Activated B cell treated with CpG ODN at 0.5 μM for 24 hours (primary cell): ENCODE measurements at regions of chr21 and their contacts with region 1.

Region 1: GRCh38 chr21:39388038-39388810 is 39.3 kb upstream of the HMGN1 start:
- DNase-seq: peak; percentile 84
- ATAC-seq: peak; percentile 82
- H3K4me3 Mint-ChIP-seq: peak overlapping the region; percentile 82
- H3K27ac Mint-ChIP-seq: peak overlapping the region; percentile 75
- H3K4me1 Mint-ChIP-seq: peaks cover 26% of the 10 kb centered on the region
- H3K27me3 Mint-ChIP-seq: no peaks in the 10 kb centered on the region
- CTCF ChIP-seq: peak; percentile 88

Region 2: DNA sequence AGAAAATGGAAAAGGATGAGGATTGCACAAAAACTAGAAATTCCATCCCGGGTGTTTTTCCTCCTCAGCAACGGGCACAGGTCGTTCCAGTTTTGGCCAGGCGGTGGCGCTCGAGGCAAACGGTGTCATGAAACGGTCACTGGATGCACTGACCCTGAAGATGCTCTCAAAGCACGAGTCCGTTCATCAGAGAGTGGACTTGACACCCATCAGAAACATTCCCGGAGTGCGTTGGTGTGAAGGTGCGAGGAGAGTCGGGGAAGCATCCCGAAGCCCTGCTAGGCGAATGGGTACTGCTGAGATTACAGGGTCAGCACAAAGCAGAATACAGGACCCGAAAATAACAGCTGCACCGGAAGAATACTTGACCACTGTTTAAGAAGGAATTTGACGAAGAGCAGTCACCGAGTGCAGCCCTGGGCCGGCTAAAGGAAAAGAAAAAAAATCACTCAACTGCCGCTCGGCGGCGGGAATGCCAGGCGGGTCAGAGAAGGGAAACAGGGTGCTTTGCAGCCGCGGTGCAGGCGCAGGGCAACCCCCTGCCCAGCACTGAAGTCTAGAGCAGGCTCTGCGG is 654.2 kb before region 1 on chr21:
- CTCF ChIA-PET with region 1: interaction called, 3 read pairs
- POLR2A ChIA-PET with region 1: no interaction called
- intact Hi-C with region 1: loop called (anchors 1 kb)
- DNase-seq: peak; percentile 71
- ATAC-seq: peak; percentile 47
- H3K4me3 Mint-ChIP-seq: peak overlapping the region; percentile 62
- H3K27ac Mint-ChIP-seq: no peak overlapping the region
- H3K4me1 Mint-ChIP-seq: peaks cover 12% of the 10 kb centered on the region
- H3K27me3 Mint-ChIP-seq: peaks cover 23% of the 10 kb centered on the region
- CTCF ChIP-seq: peak; percentile 74

Region 3: GRCh38 chr21:39263372-39263771 is 124.9 kb before region 1 on chr21:
- CTCF ChIA-PET with region 1: no interaction called
- POLR2A ChIA-PET with region 1: no interaction called
- intact Hi-C with region 1: loop called (anchors 2 kb)
- DNase-seq: no peak
- ATAC-seq: no peak
- H3K4me3 Mint-ChIP-seq: no peak overlapping the region
- H3K27ac Mint-ChIP-seq: no peak overlapping the region
- H3K4me1 Mint-ChIP-seq: peaks cover 6% of the 10 kb centered on the region
- H3K27me3 Mint-ChIP-seq: no peaks in the 10 kb centered on the region
- CTCF ChIP-seq: no peak

Region 4: DNA sequence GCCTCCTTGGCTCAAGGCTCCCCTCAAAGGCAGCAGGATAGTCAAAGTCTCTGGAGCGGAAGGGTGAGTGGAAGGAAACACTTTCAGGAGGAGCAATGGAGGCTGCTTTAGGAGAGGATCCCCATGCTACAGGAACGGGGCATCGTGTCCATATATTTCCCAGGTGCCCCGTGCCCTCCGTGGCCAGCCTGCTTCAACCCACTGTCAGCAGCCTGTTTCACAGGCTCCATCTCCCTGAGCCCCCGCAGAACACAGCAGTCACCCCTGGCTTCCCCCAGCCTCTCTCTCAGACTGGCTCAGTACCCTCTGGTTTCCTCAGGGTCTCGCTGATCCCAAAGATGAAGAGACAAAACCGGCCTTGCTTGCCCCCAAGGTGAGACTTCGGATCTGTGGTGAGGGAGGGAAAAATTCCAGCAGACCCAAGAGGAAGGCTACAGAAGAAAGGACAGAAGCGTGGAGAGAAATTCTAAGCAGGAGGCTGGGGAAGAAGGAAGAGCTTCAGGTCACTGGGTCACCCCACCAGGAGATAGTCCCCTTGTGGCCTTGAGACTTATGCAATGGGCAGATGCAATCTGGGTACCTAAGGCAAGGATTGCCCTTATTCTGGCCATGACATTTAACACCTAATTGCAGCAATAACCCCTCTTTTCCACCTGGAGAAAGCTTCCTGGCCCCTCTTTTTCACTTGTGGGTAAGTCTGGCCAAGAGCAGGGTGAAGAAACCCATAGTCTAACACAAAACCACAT is 65.6 kb before region 1 on chr21:
- CTCF ChIA-PET with region 1: no interaction called
- POLR2A ChIA-PET with region 1: no interaction called
- intact Hi-C with region 1: no loop called
- DNase-seq: no peak
- ATAC-seq: no peak
- H3K4me3 Mint-ChIP-seq: no peak overlapping the region
- H3K27ac Mint-ChIP-seq: no peak overlapping the region
- H3K4me1 Mint-ChIP-seq: peaks cover 10% of the 10 kb centered on the region
- H3K27me3 Mint-ChIP-seq: no peaks in the 10 kb centered on the region
- CTCF ChIP-seq: no peak

Region 5: DNA sequence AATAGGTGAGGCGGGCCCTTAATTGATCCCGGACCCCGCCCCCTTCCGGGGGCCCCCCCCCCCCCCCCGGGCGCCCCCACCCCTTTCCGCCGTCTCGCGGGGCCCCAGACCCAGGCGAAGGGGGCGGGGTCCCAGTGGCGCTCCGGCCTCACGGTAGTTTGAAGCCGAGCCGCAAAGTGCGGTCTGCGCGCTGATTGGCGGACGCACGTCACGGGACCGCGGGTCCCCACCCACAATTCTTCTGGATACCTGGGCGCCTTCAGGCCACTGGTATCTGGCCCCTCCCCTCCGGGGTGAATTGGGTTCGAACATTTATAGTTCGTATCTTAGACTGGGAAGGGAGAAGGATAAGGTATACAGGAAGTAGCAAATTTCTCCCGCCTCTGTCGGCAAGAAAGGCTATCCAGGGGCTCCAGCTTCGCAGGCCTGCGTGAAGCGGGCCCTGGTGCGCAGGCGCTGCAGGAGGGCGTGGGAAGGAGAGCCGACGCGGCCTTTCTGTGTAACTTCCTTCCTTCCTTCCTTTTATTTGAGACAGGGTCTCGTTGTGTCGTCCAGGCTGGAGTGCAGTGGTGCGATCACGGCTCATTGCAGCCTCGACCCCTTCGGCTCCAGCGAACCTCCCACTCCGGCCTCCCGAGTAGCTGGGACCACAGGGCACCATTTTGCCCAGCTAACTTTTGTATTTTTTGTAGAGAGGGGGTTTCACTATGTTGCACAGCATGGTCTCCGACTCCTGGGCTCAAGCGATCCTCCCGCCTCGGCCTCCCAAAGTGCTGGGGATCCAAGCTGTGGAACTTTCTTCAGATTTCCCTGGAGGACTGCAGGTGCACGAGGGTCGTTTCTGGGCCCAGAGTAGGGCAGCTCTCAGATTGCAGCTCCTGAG is 38.8 kb before region 1 on chr21:
- CTCF ChIA-PET with region 1: no interaction called
- POLR2A ChIA-PET with region 1: interaction called, 13 read pairs
- intact Hi-C with region 1: loop called (anchors 1 kb)
- DNase-seq: peak; percentile 95
- ATAC-seq: peak; percentile 84
- H3K4me3 Mint-ChIP-seq: peak overlapping the region; percentile 97
- H3K27ac Mint-ChIP-seq: peak overlapping the region; percentile 97
- H3K4me1 Mint-ChIP-seq: peaks cover 41% of the 10 kb centered on the region
- H3K27me3 Mint-ChIP-seq: no peaks in the 10 kb centered on the region
- CTCF ChIP-seq: no peak

Region 6: GRCh38 chr21:39445321-39446269 is 57.4 kb after region 1 on chr21 and contains the start of gene LCA5L:
- CTCF ChIA-PET with region 1: interaction called, 4 read pairs
- POLR2A ChIA-PET with region 1: no interaction called
- intact Hi-C with region 1: loop called (anchors 1 kb)
- DNase-seq: peak; percentile 95
- ATAC-seq: peak; percentile 91
- H3K4me3 Mint-ChIP-seq: peak within 1 kb of the TSS; percentile 94
- H3K27ac Mint-ChIP-seq: peak within 1 kb of the TSS; percentile 95
- H3K4me1 Mint-ChIP-seq: peaks cover 12% of the 10 kb centered on the region
- H3K27me3 Mint-ChIP-seq: peaks cover 12% of the 10 kb centered on the region
- CTCF ChIP-seq: no peak
- total RNA-seq, gene LCA5L: 0.33 and 0.86 TPM in 2 replicates